ENCODE measurements at regions of chr2 and their contacts with region 1.

Region 1: DNA sequence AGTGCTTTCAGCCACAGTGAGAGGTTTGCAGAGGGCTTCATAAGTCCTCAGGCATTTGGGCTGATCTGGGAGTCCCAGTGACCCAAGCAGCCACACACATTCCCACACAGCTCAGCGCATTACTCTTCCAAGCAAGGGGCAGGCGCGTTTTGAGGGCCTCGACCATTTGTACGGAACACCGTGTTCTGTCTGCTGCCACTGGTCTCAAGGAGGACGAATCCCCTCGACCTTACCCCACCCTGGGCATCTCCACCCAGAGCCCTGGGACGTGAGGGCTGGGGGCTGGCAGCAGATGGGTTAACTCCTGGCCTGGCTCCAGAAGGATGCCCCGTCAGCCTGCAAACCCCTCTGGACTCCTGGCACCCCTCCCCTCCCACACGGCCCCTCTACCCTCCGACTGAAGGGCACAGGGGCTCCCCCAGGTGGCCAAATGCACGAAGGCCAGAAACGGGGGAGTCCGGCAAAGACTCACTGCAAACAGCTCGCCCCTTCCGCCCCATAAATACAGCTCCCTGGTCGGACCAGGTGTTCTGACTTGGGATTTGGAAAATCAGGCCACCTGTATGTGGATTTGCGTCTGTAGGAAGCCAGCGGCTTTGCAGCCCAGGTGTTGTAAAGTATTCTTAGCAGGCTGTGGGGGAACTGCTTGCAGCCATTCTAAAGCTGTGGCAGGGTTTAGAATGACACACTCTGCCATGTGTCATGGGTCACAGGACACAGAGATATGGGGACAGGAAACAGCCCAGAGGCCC is 33.6 kb upstream of the PTMA start:
- DNase-seq: peak; percentile 74
- H3K4me3 Mint-ChIP-seq: no peak overlapping the region
- H3K27ac Mint-ChIP-seq: no peak overlapping the region
- H3K4me1 Mint-ChIP-seq: peaks cover 39% of the 10 kb centered on the region
- H3K27me3 Mint-ChIP-seq: peaks cover 13% of the 10 kb centered on the region

Region 2: DNA sequence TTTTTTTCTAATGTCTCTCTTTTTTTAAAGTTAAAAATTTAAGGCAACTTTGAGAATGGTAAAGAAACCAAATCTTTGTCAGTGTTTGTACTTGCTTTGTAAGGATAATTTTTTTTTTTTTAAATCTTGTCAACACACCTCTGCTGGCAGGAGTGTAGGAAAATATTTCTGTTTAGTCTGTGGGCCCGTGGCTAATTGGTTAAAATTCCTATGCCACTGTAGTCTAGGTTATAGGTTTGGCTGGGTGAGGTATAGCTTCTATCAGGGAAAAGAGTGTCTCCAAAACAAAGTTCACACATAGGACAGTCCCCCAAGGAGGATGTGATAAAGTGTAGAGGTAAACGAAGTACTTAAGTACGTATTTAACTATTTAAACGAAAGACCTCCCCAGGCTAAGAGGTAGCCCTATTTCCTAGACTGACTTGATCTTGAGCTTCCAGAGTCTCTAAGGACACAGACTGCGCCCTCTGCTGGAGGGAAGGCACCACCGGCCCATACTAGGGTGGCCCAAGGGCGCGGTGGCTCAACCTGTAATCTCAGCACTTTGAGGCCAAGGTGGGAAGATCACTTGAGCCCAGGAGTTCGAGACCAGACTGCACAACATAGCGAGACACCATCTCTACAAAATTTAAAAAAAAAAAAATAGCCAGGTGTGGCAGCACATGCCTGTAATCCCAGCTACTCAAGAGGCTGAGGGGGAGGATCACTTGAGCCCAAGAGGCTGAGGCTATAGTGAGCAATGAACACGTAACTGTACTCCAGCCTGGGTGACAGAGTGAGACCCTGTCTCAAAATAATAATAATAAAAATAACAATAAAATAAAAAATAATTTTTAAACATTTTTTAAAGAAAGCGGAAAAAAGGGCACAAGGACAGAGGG is 73.2 kb before region 1 on chr2:
- CTCF ChIA-PET with region 1: interaction called, 13 read pairs
- DNase-seq: peak; percentile 88
- H3K4me3 Mint-ChIP-seq: no peak overlapping the region
- H3K27ac Mint-ChIP-seq: no peak overlapping the region
- H3K4me1 Mint-ChIP-seq: peaks cover 17% of the 10 kb centered on the region
- H3K27me3 Mint-ChIP-seq: peaks cover 14% of the 10 kb centered on the region

Region 3: DNA sequence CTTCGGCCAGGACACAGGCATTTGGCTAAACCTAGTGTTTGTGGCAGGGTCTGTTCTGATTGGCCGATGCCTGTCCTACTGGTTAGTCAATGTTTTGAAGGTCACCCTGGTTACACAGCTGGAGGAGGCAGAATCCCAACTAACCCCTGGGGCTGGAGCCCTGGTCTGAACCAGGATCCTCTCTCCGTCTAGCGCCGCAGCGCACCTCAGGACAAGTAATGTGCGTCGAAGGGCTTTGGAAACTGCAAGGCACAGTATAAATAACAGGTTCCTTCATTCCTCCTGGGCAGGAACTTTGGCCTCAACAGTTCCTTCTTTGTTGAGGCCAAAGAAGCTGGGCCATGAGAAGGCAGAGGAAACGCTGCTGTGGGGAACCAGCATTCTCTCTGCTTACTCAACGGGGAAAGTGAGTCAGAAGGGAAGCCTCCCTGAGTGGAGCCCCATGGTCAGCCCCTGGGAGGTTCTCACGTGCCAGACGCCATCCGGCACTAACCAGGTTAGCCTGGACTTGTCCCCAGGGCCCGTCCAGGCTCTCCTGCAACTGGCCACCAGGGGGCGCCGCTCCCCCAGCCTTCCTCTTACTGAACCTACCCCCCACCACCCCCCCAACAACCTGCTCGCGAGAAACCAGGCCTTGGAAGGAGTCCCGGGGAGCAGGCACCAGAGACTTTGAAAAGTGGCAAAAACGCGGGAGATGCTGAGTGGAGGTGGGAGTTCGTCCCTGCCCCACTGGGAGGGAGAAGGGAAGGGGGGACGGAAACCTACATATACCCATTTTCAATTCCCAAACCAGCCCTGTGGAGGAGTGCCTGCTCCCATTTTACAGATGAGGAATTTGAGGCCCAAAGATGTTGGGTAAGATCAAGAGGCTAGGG is 62.3 kb before region 1 on chr2:
- CTCF ChIA-PET with region 1: interaction called, 267 read pairs
- DNase-seq: peak; percentile 94
- H3K4me3 Mint-ChIP-seq: peak overlapping the region; percentile 78
- H3K27ac Mint-ChIP-seq: peak overlapping the region; percentile 97
- H3K4me1 Mint-ChIP-seq: peaks cover 64% of the 10 kb centered on the region
- H3K27me3 Mint-ChIP-seq: peaks cover 28% of the 10 kb centered on the region

Region 4: GRCh38 chr2:231662028-231662810 is 12.5 kb before region 1 on chr2:
- CTCF ChIA-PET with region 1: interaction called, 66 read pairs
- DNase-seq: peak; percentile 96
- H3K4me3 Mint-ChIP-seq: peak overlapping the region; percentile 67
- H3K27ac Mint-ChIP-seq: peak overlapping the region; percentile 97
- H3K4me1 Mint-ChIP-seq: peaks cover 50% of the 10 kb centered on the region
- H3K27me3 Mint-ChIP-seq: peaks cover 11% of the 10 kb centered on the region

Region 5: GRCh38 chr2:231701456-231702373 is 27.0 kb after region 1 on chr2:
- CTCF ChIA-PET with region 1: interaction called, 40 read pairs
- DNase-seq: no peak
- H3K4me3 Mint-ChIP-seq: no peak overlapping the region
- H3K27ac Mint-ChIP-seq: no peak overlapping the region
- H3K4me1 Mint-ChIP-seq: peaks cover 16% of the 10 kb centered on the region
- H3K27me3 Mint-ChIP-seq: peaks cover 27% of the 10 kb centered on the region

Region 6: DNA sequence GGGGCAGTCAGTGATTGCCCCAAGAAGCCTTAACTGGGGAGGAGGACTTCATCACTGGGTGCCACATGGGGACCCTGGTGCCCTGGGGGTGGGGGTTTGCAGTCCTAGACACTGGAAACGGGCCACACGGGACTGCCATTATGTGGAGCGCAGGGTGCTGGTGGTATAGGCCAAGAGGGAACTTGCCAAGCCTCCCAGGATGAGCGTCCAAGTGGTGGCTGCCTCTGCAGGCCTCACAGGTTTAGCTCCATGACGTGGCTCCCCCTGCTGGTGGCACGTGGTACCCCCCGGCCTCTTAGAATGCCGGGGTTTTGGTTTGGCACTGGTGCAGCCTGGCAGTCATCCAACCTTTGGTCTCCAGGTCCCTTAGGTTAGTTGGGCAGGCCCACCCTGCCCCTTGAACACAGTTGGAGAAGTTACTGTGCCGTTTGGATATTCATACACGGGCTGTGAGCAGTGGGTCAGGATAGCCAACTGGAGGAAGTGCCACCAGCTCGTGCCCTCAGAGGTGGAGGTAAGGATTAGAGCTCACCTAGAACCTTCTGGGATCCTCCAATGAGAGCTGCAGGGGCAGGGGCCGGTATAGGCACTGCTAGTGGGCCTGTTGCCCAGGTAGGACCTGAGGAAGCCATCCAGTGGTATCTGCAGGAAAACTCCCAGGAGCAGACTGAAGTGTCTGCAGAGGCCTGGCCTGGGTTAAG is 39.1 kb after region 1 on chr2:
- CTCF ChIA-PET with region 1: interaction called, 473 read pairs
- DNase-seq: peak; percentile 93
- H3K4me3 Mint-ChIP-seq: peak overlapping the region; percentile 31
- H3K27ac Mint-ChIP-seq: peak overlapping the region; percentile 86
- H3K4me1 Mint-ChIP-seq: peaks cover 34% of the 10 kb centered on the region
- H3K27me3 Mint-ChIP-seq: no peaks in the 10 kb centered on the region